ENCODE measurements at regions of chr2 and their contacts with region 1.

Region 1: DNA sequence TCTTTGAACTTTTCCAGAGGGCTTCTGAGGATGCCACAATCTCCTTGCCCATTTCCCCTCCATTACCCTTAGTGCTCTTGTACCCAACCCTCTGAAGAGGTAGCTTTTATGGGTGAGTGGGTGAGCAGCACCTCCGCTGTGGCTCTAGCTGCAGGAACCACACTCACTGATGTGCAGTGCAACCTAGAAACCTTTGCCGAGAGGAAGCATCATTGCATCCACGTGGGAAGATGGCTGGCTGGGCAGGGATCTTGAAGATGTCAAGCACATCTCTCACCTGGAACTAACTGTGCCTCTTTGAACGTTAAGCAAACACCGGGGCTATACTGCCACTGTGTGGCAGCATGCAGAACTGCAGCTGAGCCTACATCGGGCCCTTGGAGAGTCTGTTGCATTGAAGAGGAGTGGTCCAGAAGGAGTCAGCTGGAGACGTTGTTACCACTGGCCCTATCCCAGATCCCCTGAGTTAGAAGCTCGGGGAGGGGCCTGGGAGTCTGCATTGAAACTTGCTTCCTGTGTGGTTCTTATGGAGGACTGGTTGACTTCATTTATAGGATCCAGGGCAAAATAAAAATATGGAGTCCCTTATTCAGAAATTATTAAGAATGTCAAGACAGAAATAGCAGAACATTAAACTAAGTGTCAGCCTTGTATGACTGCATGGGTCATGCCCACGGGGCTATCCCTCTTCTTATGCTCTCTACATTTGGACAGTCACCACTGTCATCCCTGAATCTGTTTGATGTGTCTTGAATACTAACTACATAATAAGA is 28.7 kb downstream of the IGFBP5 start:
- DNase-seq: peak; percentile 56 to 72
- H3K4me3 ChIP-seq: no peak overlapping the region
- H3K27ac ChIP-seq: no peak overlapping the region
- H3K4me1 ChIP-seq: peaks cover 25% of the 10 kb centered on the region
- H3K27me3 ChIP-seq: no peaks in the 10 kb centered on the region
- CTCF ChIP-seq: peak; percentile 99

Region 2: DNA sequence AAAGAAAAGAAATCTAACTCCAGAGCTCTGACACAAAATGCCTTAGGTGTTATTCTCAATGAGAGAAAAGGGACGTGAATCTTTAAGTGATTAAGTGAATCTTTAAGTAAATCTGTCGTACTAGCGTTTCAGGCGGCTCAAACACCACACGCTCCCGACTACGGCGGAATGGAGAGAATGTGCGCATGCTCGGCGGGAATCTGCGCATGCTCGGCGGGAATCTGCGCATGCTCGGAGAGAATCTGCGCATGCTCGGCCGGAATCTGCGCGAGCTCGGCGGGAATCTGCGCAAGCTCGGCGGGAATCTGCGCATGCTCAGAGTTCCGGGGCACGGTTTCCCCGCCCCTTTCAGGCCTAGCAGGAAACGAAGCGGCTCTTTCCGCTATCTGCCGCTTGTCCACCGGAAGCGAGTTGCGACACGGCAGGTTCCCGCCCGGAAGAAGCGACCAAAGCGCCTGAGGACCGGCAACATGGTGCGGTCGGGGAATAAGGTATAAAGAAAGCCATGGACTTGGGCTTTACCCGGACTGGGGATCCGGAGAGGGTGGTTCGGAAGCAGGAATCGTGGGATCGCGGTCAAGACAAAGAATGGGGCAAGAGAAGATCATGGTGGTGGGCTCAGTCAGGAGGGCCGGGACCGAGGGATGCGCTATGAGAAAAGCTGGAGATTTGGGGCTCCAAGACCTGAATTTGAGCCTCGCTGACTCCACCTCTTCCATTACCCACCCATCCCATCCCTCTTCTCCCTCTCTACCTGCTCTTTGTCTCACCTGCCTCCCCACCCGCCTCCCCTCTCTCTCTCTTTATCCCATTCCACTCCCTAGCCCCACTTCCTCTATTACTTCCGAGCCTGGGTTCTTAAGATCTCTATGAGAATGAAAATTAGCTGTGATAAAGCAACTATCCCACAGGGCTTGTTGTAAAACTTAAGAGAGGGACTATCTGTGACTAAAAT is 557.4 kb before region 1 on chr2 and contains the start of gene XRCC5:
- CTCF ChIA-PET with region 1: no interaction called
- POLR2A ChIA-PET with region 1: no interaction called
- intact Hi-C with region 1: loop called (anchors 1 kb)
- DNase-seq: peak; percentile 92 to 97
- H3K4me3 ChIP-seq: peak within 1 kb of the TSS; percentile 71
- H3K27ac ChIP-seq: peak within 1 kb of the TSS; percentile 54
- H3K4me1 ChIP-seq: peaks cover 18% of the 10 kb centered on the region
- H3K27me3 ChIP-seq: no peaks in the 10 kb centered on the region
- CTCF ChIP-seq: no peak
- total RNA-seq, gene XRCC5: 242 and 275 TPM in 2 replicates

Region 3: DNA sequence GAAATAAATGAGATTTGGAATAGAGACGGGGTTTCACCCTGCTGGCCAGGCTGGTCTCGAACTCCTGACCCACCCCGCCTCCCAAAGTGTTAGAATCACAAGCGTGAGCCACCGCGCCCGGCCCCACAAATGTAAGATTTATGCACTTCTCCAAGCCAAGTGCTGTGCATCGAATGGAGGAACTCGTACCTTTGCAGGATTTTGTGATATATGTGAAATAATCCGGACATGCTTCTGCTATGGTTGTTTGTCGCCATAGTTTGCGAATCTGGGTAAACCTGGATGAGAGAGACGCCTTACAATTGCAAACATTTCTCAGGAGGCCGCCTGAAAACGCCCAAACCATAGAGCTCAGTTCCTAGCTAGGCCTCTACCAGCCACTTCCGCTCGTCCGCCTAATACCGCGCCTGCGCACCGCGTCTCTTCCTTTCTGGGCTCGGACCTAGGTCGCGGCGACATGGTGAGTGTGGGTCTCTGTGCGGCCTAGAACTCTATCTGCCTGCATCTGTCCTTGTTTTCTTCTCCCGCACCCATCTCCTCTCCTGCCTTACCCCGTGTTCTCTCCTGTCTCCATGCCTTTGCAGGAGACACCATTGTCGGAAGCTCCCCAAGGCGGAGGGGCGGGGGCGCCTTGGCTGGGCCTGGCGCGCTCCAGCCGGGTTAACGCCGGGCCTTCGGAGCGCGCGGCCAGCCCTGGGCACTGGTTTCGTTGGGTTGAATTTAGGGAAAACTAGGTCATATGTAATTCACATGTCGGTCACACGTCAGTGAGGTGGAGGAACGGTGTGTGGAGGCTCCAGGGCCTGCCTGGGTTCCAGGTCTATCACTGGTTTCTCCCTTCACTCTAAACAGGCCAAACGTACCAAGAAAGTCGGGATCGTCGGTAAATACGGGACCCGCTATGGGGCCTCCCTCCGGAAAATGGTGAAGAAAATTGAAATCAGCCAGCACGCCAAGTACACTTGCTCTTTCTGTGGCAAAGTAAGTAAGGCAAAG is 167.9 kb before region 1 on chr2 and contains the start of gene RPL37A:
- CTCF ChIA-PET with region 1: no interaction called
- POLR2A ChIA-PET with region 1: no interaction called
- intact Hi-C with region 1: no loop called
- DNase-seq: peak; percentile 86 to 88
- H3K4me3 ChIP-seq: peak within 1 kb of the TSS; percentile 96
- H3K27ac ChIP-seq: peak within 1 kb of the TSS; percentile 86
- H3K4me1 ChIP-seq: peaks cover 30% of the 10 kb centered on the region
- H3K27me3 ChIP-seq: no peaks in the 10 kb centered on the region
- CTCF ChIP-seq: no peak
- total RNA-seq, gene RPL37A: 2,248 and 2,378 TPM in 2 replicates

Region 4: GRCh38 chr2:216519154-216519762 is 147.4 kb before region 1 on chr2:
- CTCF ChIA-PET with region 1: interaction called, 20 read pairs
- POLR2A ChIA-PET with region 1: no interaction called
- intact Hi-C with region 1: loop called (anchors 1 kb)
- DNase-seq: peak; percentile 53 to 64
- H3K4me3 ChIP-seq: no peak overlapping the region
- H3K27ac ChIP-seq: no peak overlapping the region
- H3K4me1 ChIP-seq: 0 out of 2 replicates have a peak, but pooled peaks cover 3% of the 10 kb centered on the region
- H3K27me3 ChIP-seq: no peaks in the 10 kb centered on the region
- CTCF ChIP-seq: peak; percentile 86

Region 5: GRCh38 chr2:216583147-216583546 is 83.5 kb before region 1 on chr2:
- CTCF ChIA-PET with region 1: interaction called, 3 read pairs
- POLR2A ChIA-PET with region 1: no interaction called
- intact Hi-C with region 1: loop called (anchors 5 kb)
- DNase-seq: peak; percentile 52 to 92
- H3K4me3 ChIP-seq: no peak overlapping the region
- H3K27ac ChIP-seq: peak overlapping the region; percentile 26; the same call in 1 of the 2 replicates
- H3K4me1 ChIP-seq: peaks cover 23% of the 10 kb centered on the region
- H3K27me3 ChIP-seq: no peaks in the 10 kb centered on the region
- CTCF ChIP-seq: no peak

Region 6: DNA sequence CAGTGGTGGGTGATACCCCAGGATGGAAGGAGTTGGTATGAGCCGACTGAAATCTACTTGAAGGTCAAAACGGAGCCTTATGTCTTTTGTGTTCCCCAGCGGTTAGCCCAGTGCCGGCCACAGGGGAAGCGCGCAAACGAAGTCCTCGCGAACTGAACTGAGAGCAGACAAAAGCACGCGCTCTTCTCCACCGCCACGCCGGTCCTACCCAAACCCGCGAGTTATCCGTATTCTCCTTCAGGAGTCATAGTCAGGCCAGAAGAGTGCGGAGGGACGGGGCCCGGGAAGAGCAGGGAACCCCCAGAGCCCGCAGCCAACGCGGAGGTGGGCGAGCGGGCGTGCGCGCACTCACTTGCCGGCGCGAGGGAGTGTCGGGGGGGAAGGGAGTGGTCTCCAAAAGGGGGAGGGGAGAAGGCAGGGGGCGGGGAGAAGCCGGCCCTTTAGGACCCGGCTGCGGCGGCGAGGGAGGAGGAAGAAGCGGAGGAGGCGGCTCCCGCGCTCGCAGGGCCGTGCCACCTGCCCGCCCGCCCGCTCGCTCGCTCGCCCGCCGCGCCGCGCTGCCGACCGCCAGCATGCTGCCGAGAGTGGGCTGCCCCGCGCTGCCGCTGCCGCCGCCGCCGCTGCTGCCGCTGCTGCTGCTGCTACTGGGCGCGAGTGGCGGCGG is 33.6 kb before region 1 on chr2 and contains the start of gene IGFBP2:
- CTCF ChIA-PET with region 1: interaction called, 3 read pairs
- POLR2A ChIA-PET with region 1: no interaction called
- intact Hi-C with region 1: loop called (anchors 2 kb)
- DNase-seq: peak in 1 of 2 experiments; percentile 53
- H3K4me3 ChIP-seq: peak within 1 kb of the TSS; percentile 56
- H3K27ac ChIP-seq: no peak within 1 kb of the TSS
- H3K4me1 ChIP-seq: peaks cover 43% of the 10 kb centered on the region
- H3K27me3 ChIP-seq: no peaks in the 10 kb centered on the region
- CTCF ChIP-seq: no peak
- total RNA-seq, gene IGFBP2: 106 and 133 TPM in 2 replicates

Region 7: GRCh38 chr2:216905649-216906329 is 239.1 kb after region 1 on chr2:
- CTCF ChIA-PET with region 1: no interaction called
- POLR2A ChIA-PET with region 1: no interaction called
- intact Hi-C with region 1: no loop called
- DNase-seq: no peak
- H3K4me3 ChIP-seq: no peak overlapping the region
- H3K27ac ChIP-seq: no peak overlapping the region
- H3K4me1 ChIP-seq: no peaks in the 10 kb centered on the region
- H3K27me3 ChIP-seq: no peaks in the 10 kb centered on the region
- CTCF ChIP-seq: no peak